Activated CD4-positive, alpha-beta T cell treated with anti-CD3 and anti-CD28 coated beads for 36 hours (primary cell): ENCODE measurements at regions of chr9 and their contacts with region 1.

Region 1: GRCh38 chr9:131739980-131740648 is at the start of gene RAPGEF1:
- DNase-seq: peak; percentile 90
- ATAC-seq: peak; percentile 74
- H3K4me3 Mint-ChIP-seq: peak within 1 kb of the TSS; percentile 95
- H3K27ac Mint-ChIP-seq: peak within 1 kb of the TSS; percentile 95
- H3K4me1 Mint-ChIP-seq: peaks cover 57% of the 10 kb centered on the region
- H3K27me3 Mint-ChIP-seq: no peaks in the 10 kb centered on the region
- total RNA-seq, gene RAPGEF1: 86.7 to 108 TPM

Region 2: GRCh38 chr9:131270171-131271015 is 469.7 kb before region 1 on chr9:
- CTCF ChIA-PET with region 1: no interaction called
- POLR2A ChIA-PET with region 1: no interaction called
- intact Hi-C with region 1: loop called in 1 of 2 experiments (anchors 5 kb)
- DNase-seq: peak; percentile 77
- ATAC-seq: peak; percentile 13
- H3K4me3 Mint-ChIP-seq: peak overlapping the region; percentile 90
- H3K27ac Mint-ChIP-seq: peak overlapping the region; percentile 100
- H3K4me1 Mint-ChIP-seq: peaks cover 58% of the 10 kb centered on the region
- H3K27me3 Mint-ChIP-seq: no peaks in the 10 kb centered on the region

Region 3: DNA sequence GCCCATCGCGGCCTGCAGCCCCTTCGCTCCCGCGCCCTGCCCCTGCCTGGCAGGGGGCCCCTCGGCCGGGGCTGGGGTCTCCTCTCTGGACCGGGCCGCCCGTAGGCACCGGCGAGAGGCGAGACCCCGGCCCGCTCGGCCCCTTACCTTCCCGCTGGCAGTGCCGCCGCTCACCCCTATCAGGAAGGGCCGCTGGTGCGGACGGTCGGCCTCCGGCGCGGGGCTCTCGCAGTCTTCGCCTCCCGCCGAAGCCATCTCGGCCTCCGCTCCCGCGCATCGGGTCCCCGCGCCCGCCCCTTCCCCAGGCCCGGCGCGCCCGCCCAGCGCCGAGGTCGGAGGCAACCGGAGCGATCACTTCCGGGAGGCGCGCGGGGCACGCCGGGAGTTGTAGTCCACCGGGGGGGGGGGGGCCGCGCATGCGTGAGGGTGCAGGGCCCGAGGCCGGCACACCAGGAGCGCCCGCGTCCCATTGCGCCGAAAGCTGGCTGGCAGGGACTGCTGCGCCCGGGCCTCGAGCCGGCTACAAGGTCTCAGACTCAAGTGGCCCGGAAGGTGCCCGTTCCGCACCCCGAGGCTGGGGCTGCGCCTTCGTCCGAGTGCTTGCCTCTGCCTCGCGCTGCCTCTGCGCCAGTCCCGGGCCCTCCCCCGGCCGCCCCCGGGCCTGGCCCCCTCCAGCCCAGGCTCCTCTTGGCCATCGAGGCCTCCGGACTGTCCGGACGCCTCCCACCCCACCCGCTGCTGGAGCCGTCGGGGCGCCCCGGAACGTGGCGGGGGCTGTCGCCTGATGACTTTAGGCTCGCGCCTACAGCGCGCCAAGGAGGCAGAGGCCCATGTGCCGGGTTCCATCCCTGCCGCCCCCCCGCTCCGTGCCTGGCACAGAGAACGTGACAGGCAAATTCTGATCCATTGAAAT is 208.9 kb before region 1 on chr9 and contains the start of gene UCK1:
- CTCF ChIA-PET with region 1: no interaction called
- POLR2A ChIA-PET with region 1: no interaction called
- intact Hi-C with region 1: loop called in 1 of 2 experiments (anchors 1 kb)
- DNase-seq: peak; percentile 89
- ATAC-seq: peak; percentile 95
- H3K4me3 Mint-ChIP-seq: peak within 1 kb of the TSS; percentile 78
- H3K27ac Mint-ChIP-seq: peak within 1 kb of the TSS; percentile 69
- H3K4me1 Mint-ChIP-seq: peaks cover 29% of the 10 kb centered on the region
- H3K27me3 Mint-ChIP-seq: no peaks in the 10 kb centered on the region
- total RNA-seq, gene UCK1: 15.2 to 16.5 TPM

Region 4: GRCh38 chr9:131635285-131635684 is 104.8 kb before region 1 on chr9:
- CTCF ChIA-PET with region 1: interaction called, 12 read pairs
- POLR2A ChIA-PET with region 1: no interaction called
- intact Hi-C with region 1: no loop called
- DNase-seq: peak; percentile 87
- ATAC-seq: peak; percentile 99
- H3K4me3 Mint-ChIP-seq: no peak overlapping the region
- H3K27ac Mint-ChIP-seq: peak overlapping the region; percentile 89
- H3K4me1 Mint-ChIP-seq: peaks cover 35% of the 10 kb centered on the region
- H3K27me3 Mint-ChIP-seq: no peaks in the 10 kb centered on the region

Region 5: GRCh38 chr9:131668439-131669268 is 71.5 kb before region 1 on chr9:
- CTCF ChIA-PET with region 1: interaction called, 14 read pairs
- POLR2A ChIA-PET with region 1: interaction called, 4 read pairs
- intact Hi-C with region 1: no loop called
- DNase-seq: peak; percentile 83
- ATAC-seq: peak; percentile 68
- H3K4me3 Mint-ChIP-seq: peak overlapping the region; percentile 54
- H3K27ac Mint-ChIP-seq: peak overlapping the region; percentile 96
- H3K4me1 Mint-ChIP-seq: peaks cover 93% of the 10 kb centered on the region
- H3K27me3 Mint-ChIP-seq: no peaks in the 10 kb centered on the region

Region 6: DNA sequence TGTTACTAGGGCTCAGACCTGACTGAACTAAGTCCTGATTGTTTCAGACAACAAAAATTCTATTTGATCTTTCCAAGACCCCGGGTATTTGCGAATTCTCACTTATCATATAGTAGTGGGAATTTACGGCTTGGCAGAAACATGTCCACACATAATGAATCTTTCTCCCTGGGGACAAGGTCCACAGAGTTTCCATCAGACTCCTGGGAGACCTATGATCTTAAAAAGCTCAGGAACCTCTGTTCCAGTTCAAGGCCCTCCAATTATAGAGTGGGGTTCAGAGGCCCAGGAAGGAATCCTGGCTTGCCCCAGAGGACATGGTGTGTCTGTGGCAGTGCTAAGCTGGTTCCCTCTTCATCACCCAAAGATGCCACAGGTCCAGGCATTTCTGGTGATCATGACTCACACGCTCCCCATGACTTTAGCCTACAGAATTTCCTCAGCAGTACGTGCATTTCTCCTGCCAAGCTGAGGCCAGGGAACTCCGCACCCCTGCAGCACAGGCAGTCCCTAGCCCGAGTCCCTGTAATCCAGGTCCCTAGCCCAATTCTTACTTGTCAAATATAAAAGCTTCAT is 12.8 kb before region 1 on chr9:
- CTCF ChIA-PET with region 1: interaction called, 11 read pairs
- POLR2A ChIA-PET with region 1: interaction called, 7 read pairs
- intact Hi-C with region 1: loop called in 1 of 2 experiments (anchors 1 kb)
- DNase-seq: peak; percentile 44
- ATAC-seq: no peak
- H3K4me3 Mint-ChIP-seq: peak overlapping the region; percentile 66
- H3K27ac Mint-ChIP-seq: peak overlapping the region; percentile 93
- H3K4me1 Mint-ChIP-seq: peaks cover 83% of the 10 kb centered on the region
- H3K27me3 Mint-ChIP-seq: no peaks in the 10 kb centered on the region

Region 7: GRCh38 chr9:131854896-131855613 is 114.9 kb after region 1 on chr9:
- CTCF ChIA-PET with region 1: no interaction called
- POLR2A ChIA-PET with region 1: no interaction called
- intact Hi-C with region 1: no loop called
- DNase-seq: no peak
- ATAC-seq: no peak
- H3K4me3 Mint-ChIP-seq: no peak overlapping the region
- H3K27ac Mint-ChIP-seq: no peak overlapping the region
- H3K4me1 Mint-ChIP-seq: no peaks in the 10 kb centered on the region
- H3K27me3 Mint-ChIP-seq: no peaks in the 10 kb centered on the region

Region 8: DNA sequence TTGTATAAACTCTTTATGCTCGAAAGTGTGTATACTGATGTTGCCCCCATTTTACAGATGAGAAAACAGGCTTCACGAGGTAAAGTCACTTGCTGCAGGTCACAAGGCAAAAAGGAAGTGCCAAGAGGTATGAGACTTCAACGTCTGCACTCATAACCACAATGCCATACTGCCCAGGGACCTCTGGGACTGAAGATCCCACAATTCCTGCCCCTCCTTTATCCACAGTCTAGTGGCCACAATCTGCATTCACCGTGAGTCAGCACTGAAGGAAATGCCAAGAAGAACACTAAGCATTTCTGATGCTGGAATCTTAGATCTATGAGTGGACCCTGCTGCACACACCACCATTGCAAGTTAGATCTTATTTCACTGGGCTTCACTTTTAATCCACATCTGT is 302.2 kb after region 1 on chr9:
- CTCF ChIA-PET with region 1: no interaction called
- POLR2A ChIA-PET with region 1: no interaction called
- intact Hi-C with region 1: no loop called
- DNase-seq: no peak
- ATAC-seq: no peak
- H3K4me3 Mint-ChIP-seq: no peak overlapping the region
- H3K27ac Mint-ChIP-seq: no peak overlapping the region
- H3K4me1 Mint-ChIP-seq: no peaks in the 10 kb centered on the region
- H3K27me3 Mint-ChIP-seq: no peaks in the 10 kb centered on the region